ENCODE measurements at regions of chr1 and their contacts with region 1.

Region 1: GRCh38 chr1:32964461-32965250 is at the start of gene RNF19B:
- DNase-seq: peak; percentile 98 to 99 (median 99)
- ATAC-seq: peak; percentile 98
- H3K4me3 ChIP-seq: peak within 1 kb of the TSS; percentile 63
- H3K27ac ChIP-seq: peak within 1 kb of the TSS; percentile 77
- H3K4me1 ChIP-seq: peaks cover 28 to 36% of the 10 kb centered on the region in 2 experiments
- H3K27me3 ChIP-seq: no peaks in the 10 kb centered on the region
- CTCF ChIP-seq: no peak
- EP300 ChIP-seq: no peak
- POLR2A ChIP-seq: peak; percentile 89
- RAD21 ChIP-seq: peak in 1 of 2 experiments; percentile 19; a peak in 1 of 4 replicates
- polyA plus RNA-seq, gene RNF19B: 2.6 to 2.8 TPM

Region 2: GRCh38 chr1:32939655-32940371 is 24.8 kb before region 1 on chr1:
- CTCF ChIA-PET with region 1: no interaction called
- POLR2A ChIA-PET with region 1: interaction called, 16 read pairs
- in situ Hi-C with region 1: no loop called
- intact Hi-C with region 1: no loop called
- DNase-seq: peak; percentile 35 to 83 (median 66)
- ATAC-seq: peak; percentile 92
- H3K4me3 ChIP-seq: no peak overlapping the region
- H3K27ac ChIP-seq: no peak overlapping the region
- H3K4me1 ChIP-seq: peaks cover 5 to 13% of the 10 kb centered on the region in 2 experiments; a peak in 4 of 5 replicates
- H3K27me3 ChIP-seq: no peaks in the 10 kb centered on the region
- CTCF ChIP-seq: no peak
- EP300 ChIP-seq: peak; percentile 64
- POLR2A ChIP-seq: no peak
- RAD21 ChIP-seq: peak in 1 of 2 experiments; percentile 20; a peak in 1 of 4 replicates

Region 3: GRCh38 chr1:32953495-32953894 is 11.2 kb before region 1 on chr1:
- CTCF ChIA-PET with region 1: no interaction called
- POLR2A ChIA-PET with region 1: interaction called, 17 read pairs
- in situ Hi-C with region 1: no loop called
- intact Hi-C with region 1: no loop called
- DNase-seq: no peak
- ATAC-seq: no peak
- H3K4me3 ChIP-seq: no peak overlapping the region
- H3K27ac ChIP-seq: no peak overlapping the region
- H3K4me1 ChIP-seq: no peaks in the 10 kb centered on the region
- H3K27me3 ChIP-seq: no peaks in the 10 kb centered on the region
- CTCF ChIP-seq: no peak
- EP300 ChIP-seq: no peak
- POLR2A ChIP-seq: no peak
- RAD21 ChIP-seq: no peak

Region 4: GRCh38 chr1:32981003-32981901 is 16.6 kb after region 1 on chr1:
- CTCF ChIA-PET with region 1: no interaction called
- POLR2A ChIA-PET with region 1: interaction called, 12 read pairs
- in situ Hi-C with region 1: no loop called
- intact Hi-C with region 1: no loop called
- DNase-seq: peak in 2 of 4 experiments; percentile 40 to 67
- ATAC-seq: peak; percentile 86
- H3K4me3 ChIP-seq: no peak overlapping the region
- H3K27ac ChIP-seq: peak overlapping the region; percentile 60; the same call in 2 of the 3 replicates
- H3K4me1 ChIP-seq: peaks cover 0 to 2% of the 10 kb centered on the region in 2 experiments; a peak in 3 of 5 replicates
- H3K27me3 ChIP-seq: peaks cover 0 to 4% of the 10 kb centered on the region in 2 experiments; a peak in 2 of 5 replicates
- CTCF ChIP-seq: no peak
- EP300 ChIP-seq: 0 out of 2 replicates have a peak, but pooled peaks have one; percentile 17
- POLR2A ChIP-seq: no peak
- RAD21 ChIP-seq: 0 out of 4 replicates have a peak, but pooled peaks of 1 of the 2 experiments have one; percentile 10

Region 5: GRCh38 chr1:32992489-32993323 is 28.1 kb after region 1 on chr1:
- CTCF ChIA-PET with region 1: no interaction called
- POLR2A ChIA-PET with region 1: interaction called, 22 read pairs
- in situ Hi-C with region 1: no loop called
- intact Hi-C with region 1: loop called (anchors 1 kb)
- DNase-seq: peak; percentile 63 to 77 (median 66)
- ATAC-seq: peak; percentile 88
- H3K4me3 ChIP-seq: no peak overlapping the region
- H3K27ac ChIP-seq: no peak overlapping the region
- H3K4me1 ChIP-seq: peaks cover 15 to 22% of the 10 kb centered on the region in 2 experiments
- H3K27me3 ChIP-seq: no peaks in the 10 kb centered on the region
- CTCF ChIP-seq: no peak
- EP300 ChIP-seq: no peak
- POLR2A ChIP-seq: no peak
- RAD21 ChIP-seq: no peak

Region 6: GRCh38 chr1:33624991-33625870 is 660.6 kb after region 1 on chr1:
- CTCF ChIA-PET with region 1: no interaction called
- POLR2A ChIA-PET with region 1: no interaction called
- in situ Hi-C with region 1: no loop called
- intact Hi-C with region 1: no loop called
- DNase-seq: peak; percentile 75 to 91 (median 89)
- ATAC-seq: peak; percentile 99
- H3K4me3 ChIP-seq: no peak overlapping the region
- H3K27ac ChIP-seq: no peak overlapping the region
- H3K4me1 ChIP-seq: peaks cover 0 to 10% of the 10 kb centered on the region in 2 experiments; a peak in 1 of 5 replicates
- H3K27me3 ChIP-seq: peaks cover 4 to 35% of the 10 kb centered on the region in 2 experiments; a peak in 2 of 5 replicates
- CTCF ChIP-seq: peak; percentile 86 to 94 (median 86)
- EP300 ChIP-seq: no peak
- POLR2A ChIP-seq: no peak
- RAD21 ChIP-seq: peak in 1 of 2 experiments; percentile 59; a peak in 2 of 4 replicates